ENCODE measurements at regions of chr4 and their contacts with region 1.

Region 1: GRCh38 chr4:16026160-16026761 is 57.6 kb downstream of the PROM1 start:
- DNase-seq: no peak

Region 2: DNA sequence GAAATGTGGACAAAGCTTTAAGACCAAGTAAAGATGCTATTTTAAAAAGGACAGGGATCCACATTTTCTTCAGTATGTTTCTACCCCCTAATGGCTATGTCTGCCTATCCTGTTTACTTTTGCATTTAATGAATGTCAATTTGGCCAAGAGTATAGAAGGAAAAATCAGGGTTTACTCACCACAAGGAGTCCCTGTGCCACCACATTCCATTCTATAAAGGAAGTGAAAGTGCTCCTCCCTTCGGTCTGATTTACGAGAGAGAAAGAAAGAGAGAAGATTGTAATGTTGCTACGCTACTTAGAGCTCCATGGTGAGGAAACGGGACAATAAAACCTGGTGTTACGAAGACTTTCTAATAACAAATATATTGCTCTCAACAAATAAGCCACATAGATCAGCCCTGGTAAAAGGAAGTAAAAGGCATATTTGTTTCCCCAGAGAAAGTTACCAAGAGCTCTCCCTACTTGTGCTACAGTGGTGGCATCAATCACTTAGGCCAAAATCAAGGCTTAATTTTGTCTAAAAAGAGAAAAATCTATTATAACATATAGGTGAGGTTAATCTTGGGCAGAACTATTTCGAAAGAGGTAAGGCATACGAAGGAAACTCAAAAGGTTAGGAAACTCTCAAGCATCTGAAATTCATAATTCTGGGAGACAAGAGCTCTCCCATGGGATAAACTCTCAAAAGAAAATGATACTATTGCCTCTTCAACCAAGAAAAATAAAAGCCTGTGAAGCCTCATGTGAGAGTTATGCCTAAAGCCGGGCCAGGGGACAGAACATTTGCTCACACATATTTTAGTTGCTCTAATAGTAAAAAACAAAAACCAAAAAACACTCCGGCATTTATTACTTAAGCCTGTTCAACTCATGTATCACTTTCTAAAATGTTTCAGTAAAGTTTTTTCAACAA is 170.5 kb after region 1 on chr4:
- intact Hi-C with region 1: loop called (anchors 1 kb)
- DNase-seq: no peak

Region 3: DNA sequence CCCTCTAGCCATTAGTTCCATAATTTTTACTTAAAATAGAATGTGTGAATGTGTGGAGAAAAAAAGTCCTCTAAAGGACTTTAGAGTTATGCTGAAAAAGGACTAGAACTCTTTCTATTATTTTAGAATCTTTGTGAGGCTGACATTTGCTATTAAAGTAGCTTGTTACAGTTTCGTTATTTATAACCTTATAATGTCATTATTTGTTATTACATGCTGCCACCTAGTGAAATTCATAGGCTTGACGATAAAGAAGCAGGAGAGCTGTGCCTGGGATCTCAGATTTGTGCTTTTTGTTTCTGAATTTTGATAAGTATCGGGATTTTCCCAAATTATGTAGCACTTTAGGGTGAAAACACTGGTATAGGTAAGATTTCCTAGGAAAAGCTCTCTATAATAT is 238.5 kb after region 1 on chr4:
- intact Hi-C with region 1: loop called (anchors 2 kb)
- DNase-seq: no peak

Measured in posterior cingulate gyrus (tissue), 11 donors.